RWPE1 (cell line): ENCODE measurements at regions of chr2 and their contacts with region 1.

Region 1: GRCh38 chr2:121872651-121873050 is 117.2 kb downstream of the TSN start:
- DNase-seq: no peak
- H3K27ac ChIP-seq: no peak overlapping the region
- CTCF ChIP-seq: no peak

Region 2: DNA sequence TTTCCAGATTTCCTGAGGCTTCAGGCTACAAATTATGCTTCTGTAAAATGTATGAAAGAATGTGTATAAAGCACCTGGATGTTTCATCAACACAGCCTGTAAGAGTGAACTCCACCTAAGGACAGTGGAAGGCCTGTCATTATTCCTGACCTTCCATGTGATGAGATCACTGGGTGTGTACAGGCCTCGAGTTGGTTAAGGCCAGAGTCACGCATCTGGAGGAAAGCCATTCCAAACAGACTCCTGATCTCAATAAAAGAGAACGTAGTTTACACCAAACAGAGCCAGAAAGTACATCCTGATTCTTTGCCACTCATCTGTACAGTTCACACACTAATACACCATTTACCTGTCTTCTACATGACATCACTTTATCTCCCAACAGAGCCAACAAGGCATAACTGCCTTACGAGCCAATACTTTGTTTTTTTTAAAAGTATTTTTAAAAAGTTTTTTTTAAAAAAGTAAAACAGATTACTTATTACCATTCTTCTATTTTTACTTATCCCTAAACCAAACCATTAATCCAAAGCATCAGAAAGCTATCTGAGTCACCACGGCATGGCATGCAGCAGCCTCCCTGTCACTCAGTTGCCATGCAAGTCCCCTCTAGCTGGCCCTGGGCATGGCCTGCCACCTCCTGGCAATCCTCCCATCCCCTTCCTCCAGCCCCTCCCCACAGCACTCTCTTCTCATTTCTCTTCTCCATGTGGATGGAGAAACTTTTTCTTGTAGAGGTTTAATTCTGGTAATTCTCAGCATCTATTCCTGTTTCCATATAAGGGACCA is 508.8 kb before region 1 on chr2:
- CTCF ChIA-PET with region 1: no interaction called
- POLR2A ChIA-PET with region 1: no interaction called
- DNase-seq: peak; percentile 56
- H3K27ac ChIP-seq: peak overlapping the region; percentile 93
- CTCF ChIP-seq: no peak

Region 3: GRCh38 chr2:121836611-121837010 is 36.0 kb before region 1 on chr2:
- CTCF ChIA-PET with region 1: no interaction called
- POLR2A ChIA-PET with region 1: interaction called, 11 read pairs
- DNase-seq: no peak
- H3K27ac ChIP-seq: no peak overlapping the region
- CTCF ChIP-seq: no peak

Region 4: GRCh38 chr2:121860033-121860757 is 12.5 kb before region 1 on chr2:
- CTCF ChIA-PET with region 1: no interaction called
- POLR2A ChIA-PET with region 1: no interaction called
- DNase-seq: peak; percentile 22
- H3K27ac ChIP-seq: no peak overlapping the region
- CTCF ChIP-seq: no peak

Region 5: GRCh38 chr2:121888200-121888579 is 15.5 kb after region 1 on chr2:
- CTCF ChIA-PET with region 1: no interaction called
- POLR2A ChIA-PET with region 1: no interaction called
- DNase-seq: peak; percentile 53
- H3K27ac ChIP-seq: no peak overlapping the region
- CTCF ChIP-seq: peak; percentile 37